ENCODE measurements at regions of chr3 and their contacts with region 1.

Region 1: GRCh38 chr3:143119009-143119914 is at the start of gene CHST2:
- DNase-seq: peak; percentile 92
- H3K4me3 Mint-ChIP-seq: peak within 1 kb of the TSS; percentile 89
- H3K27ac Mint-ChIP-seq: peak within 1 kb of the TSS; percentile 76
- H3K4me1 Mint-ChIP-seq: peaks cover 29% of the 10 kb centered on the region
- H3K27me3 Mint-ChIP-seq: peaks cover 22% of the 10 kb centered on the region
- total RNA-seq, gene CHST2: 6.1 and 6.4 TPM in 2 replicates

Region 2: GRCh38 chr3:143060906-143061305 is 58.4 kb before region 1 on chr3:
- intact Hi-C with region 1: loop called (anchors 2 kb)
- DNase-seq: no peak
- H3K4me3 Mint-ChIP-seq: peak overlapping the region; percentile 40
- H3K27ac Mint-ChIP-seq: peak overlapping the region; percentile 13
- H3K4me1 Mint-ChIP-seq: peaks cover 16% of the 10 kb centered on the region
- H3K27me3 Mint-ChIP-seq: no peaks in the 10 kb centered on the region

Region 3: DNA sequence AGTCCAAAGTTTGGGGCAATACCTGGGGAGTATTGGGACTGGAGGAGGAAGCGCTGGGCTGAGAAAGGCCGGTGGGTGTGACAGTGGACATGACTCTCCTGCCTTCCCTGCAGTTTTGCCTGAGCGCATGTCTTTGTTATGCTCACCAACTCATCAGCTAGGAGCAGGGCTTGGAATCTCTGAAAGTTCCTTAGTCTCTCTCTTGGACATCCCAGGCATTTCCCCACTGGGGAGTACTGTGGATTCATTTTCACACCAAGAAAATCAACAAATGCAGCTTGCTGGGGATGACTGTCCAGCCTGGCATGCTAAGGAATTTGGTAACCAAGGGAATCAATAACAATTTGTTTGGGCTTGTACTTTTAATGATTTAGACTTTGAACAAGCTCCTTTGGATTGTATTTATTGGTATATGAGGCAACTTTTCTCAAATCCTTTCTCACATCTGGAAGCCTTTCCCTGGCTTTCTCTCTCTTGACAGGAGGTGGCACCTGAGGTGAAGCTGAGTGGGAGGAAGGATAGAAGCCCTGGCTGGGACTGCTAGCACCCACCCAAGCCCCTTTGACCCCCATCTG is 48.2 kb before region 1 on chr3:
- intact Hi-C with region 1: no loop called
- DNase-seq: peak; percentile 28
- H3K4me3 Mint-ChIP-seq: no peak overlapping the region
- H3K27ac Mint-ChIP-seq: no peak overlapping the region
- H3K4me1 Mint-ChIP-seq: no peaks in the 10 kb centered on the region
- H3K27me3 Mint-ChIP-seq: no peaks in the 10 kb centered on the region

Region 4: GRCh38 chr3:143302638-143303171 is 183.4 kb after region 1 on chr3:
- intact Hi-C with region 1: loop called (anchors 5 kb)
- DNase-seq: no peak
- H3K4me3 Mint-ChIP-seq: no peak overlapping the region
- H3K27ac Mint-ChIP-seq: no peak overlapping the region
- H3K4me1 Mint-ChIP-seq: peaks cover 21% of the 10 kb centered on the region
- H3K27me3 Mint-ChIP-seq: no peaks in the 10 kb centered on the region

Region 5: DNA sequence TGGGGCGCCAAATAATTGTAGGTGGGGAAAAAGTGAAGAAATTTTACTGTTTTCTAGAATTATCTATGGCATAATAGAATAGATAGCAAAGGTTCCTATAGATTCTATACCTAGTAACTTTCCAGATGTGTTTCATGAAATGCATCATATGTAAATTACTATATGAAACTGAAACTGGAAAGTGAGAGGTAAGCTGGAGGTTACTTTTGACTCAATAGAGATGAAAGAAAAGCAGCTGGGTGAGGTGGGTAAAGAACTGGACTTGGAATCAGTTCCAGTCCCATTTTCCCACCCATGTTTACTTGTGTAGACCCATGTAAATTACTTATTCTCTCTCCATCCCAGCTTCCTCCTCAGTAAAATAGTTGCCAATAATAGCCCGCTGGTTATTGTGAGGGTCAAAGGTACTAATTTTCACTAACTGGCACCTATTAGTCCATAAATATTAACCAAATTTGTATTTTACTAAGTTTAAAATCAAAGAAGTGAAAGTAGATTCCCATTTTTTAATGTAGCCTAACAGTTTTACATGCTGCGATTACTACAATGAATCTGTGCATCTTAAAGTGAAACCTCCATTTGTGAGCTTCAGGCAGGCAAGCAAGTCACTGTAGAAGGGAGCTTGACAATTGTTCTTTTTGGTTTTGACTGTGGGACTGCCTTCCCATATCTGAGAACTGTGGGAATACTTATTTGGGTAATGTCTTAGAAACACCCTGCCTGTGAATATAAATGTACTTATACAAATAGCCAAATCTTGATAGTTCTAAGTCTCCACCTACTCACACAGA is 416.9 kb after region 1 on chr3:
- intact Hi-C with region 1: loop called (anchors 5 kb)
- DNase-seq: peak; percentile 58
- H3K4me3 Mint-ChIP-seq: no peak overlapping the region
- H3K27ac Mint-ChIP-seq: no peak overlapping the region
- H3K4me1 Mint-ChIP-seq: peaks cover 14% of the 10 kb centered on the region
- H3K27me3 Mint-ChIP-seq: no peaks in the 10 kb centered on the region

Region 6: GRCh38 chr3:143674100-143674968 is 555.1 kb after region 1 on chr3:
- intact Hi-C with region 1: loop called (anchors 1 kb)
- DNase-seq: peak; percentile 94
- H3K4me3 Mint-ChIP-seq: peak overlapping the region; percentile 21
- H3K27ac Mint-ChIP-seq: no peak overlapping the region
- H3K4me1 Mint-ChIP-seq: peaks cover 4% of the 10 kb centered on the region
- H3K27me3 Mint-ChIP-seq: no peaks in the 10 kb centered on the region

Region 7: GRCh38 chr3:144241404-144241803 is 1122.1 kb after region 1 on chr3:
- intact Hi-C with region 1: no loop called
- DNase-seq: no peak
- H3K4me3 Mint-ChIP-seq: no peak overlapping the region
- H3K27ac Mint-ChIP-seq: no peak overlapping the region
- H3K4me1 Mint-ChIP-seq: no peaks in the 10 kb centered on the region
- H3K27me3 Mint-ChIP-seq: no peaks in the 10 kb centered on the region

Measured in activated CD4-positive, alpha-beta T cell treated with anti-CD3 and anti-CD28 coated beads, Interleukin-2, amount 10 ng/mL, durations not matched to agents 24 days and 14 days (primary cell).